HCT116 (cell line): ENCODE measurements at regions of chr1 and their contacts with region 1.

Region 1: DNA sequence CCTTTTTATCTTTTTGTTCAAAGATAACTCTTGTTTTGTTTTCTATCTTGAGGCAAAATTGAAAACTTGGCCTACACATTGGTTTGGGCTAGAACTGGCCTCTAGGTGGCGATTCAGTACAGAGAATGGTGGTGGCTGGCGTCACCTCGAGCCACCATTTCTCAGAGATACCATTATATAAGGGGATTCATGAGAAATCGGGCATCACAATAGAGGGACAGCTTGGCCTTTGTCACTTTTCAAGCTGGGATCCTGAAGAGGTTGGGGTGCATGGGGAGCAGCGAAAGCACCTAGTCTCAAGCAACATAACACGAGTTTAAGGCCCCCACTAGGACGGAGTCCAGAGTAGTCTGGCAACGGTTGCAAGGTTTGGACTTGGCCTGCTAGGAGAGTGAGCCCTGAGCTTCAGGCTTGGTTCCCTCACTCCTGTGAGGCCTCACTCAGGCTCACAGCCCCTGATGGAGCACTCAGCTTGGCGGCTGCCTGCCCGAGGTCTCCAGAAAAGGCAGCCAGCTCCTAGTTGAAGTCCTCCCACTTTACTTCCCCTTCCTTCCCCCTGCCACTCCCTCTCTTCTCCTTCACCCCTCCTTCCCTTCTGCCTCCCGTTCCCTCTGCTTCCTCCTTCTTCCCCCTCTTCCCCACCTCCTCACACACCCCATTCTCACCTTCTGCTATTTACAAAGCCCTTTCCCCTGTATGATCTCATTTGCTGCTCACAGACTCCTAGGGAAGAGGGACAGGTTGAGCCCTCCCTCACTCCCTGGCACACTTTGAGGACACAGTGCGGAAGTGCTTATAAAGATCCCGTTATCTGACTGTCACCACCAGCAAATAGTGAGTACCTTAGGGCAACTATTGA is 67.8 kb downstream of the LRIG2 start:
- DNase-seq: peak; percentile 43
- ATAC-seq: peak; percentile 94
- H3K4me3 ChIP-seq: no peak overlapping the region
- H3K27ac ChIP-seq: no peak overlapping the region
- H3K4me1 ChIP-seq: peaks cover 0 to 14% of the 10 kb centered on the region in 2 experiments; a peak in 2 of 4 replicates
- H3K27me3 ChIP-seq: no peaks in the 10 kb centered on the region
- CTCF ChIP-seq: peak; percentile 83 to 97 (median 85)
- POLR2A ChIP-seq: no peak
- RAD21 ChIP-seq: peak; percentile 96

Region 2: DNA sequence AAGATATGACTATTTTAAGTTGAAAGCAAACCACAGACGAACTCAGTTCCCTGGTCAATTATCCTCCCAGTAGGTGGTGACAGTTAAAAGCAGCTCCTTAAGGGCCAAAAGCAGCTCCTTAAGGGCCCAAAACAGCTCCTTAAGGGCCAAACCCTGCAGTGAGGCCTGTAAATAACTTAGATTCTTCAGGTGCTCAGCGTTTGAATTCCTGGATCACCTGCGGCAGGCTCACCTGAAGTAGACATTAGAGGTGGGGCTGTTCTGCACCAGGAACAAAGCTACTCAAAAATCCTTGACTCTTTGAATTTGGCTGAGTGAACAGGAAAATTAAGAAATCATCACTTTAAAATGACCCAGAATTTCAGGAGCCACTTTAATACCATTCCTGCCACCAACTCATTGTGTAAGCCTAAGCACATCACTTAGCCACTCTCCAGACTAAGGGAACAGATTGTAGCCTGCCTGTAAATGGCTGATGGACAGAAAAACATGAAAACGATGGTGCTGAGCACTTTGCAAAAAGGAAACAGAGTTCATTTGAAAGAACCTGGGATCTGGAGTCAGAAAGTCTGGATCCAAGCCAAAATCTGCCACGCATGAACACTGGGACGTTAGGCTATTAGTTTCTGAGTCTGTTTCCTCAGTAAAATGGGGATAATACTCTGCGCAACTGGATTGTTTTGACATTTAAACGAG is 59.1 kb after region 1 on chr1:
- CTCF ChIA-PET with region 1: no interaction called
- POLR2A ChIA-PET with region 1: no interaction called
- RAD21 ChIA-PET with region 1: no interaction called
- intact Hi-C with region 1: no loop called
- DNase-seq: no peak
- ATAC-seq: peak; percentile 60; the same call in 1 of the 2 replicates
- H3K4me3 ChIP-seq: no peak overlapping the region
- H3K27ac ChIP-seq: peak overlapping the region; percentile 32
- H3K4me1 ChIP-seq: peaks cover 9 to 15% of the 10 kb centered on the region in 2 experiments; a peak in 3 of 4 replicates
- H3K27me3 ChIP-seq: no peaks in the 10 kb centered on the region
- CTCF ChIP-seq: no peak
- POLR2A ChIP-seq: no peak
- RAD21 ChIP-seq: no peak

Region 3: DNA sequence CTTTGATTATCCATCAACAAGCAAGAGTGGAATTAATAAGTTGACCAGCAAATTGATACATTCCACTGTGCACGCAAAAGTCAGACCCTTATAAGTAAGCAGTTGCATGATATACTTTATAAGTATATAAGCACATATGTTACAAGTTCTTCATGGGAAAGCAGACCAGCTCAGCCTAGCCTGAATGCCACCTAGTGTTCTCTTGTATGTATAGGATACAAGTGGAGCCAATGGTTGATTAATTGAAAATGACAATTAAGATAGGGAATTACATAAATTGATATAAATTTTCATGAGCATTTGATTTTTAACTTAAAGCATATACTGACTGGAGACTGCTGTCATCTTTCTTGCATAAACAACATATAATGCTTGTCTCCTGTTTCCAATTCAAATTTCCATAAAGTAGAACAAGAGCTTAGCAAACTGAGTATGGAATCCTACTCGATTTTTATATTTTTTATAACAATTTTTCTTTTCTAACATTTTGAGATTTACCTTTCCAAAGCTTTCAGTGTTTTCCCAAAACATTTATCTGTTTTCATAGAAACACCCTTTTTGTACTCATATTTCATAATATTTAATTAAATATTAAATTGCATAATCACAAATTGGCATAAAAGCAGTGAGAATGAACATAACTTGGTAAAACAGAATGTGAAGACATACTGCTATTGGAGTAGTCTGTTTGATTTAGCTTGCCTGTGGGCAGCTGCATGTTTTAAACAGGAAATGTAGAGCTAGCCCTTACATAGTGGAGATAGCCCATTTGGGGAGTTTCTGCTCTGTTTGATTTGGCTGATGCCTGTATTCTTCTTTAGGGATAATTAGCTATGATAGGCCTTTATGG is 312.3 kb after region 1 on chr1:
- CTCF ChIA-PET with region 1: interaction called, 22 read pairs
- POLR2A ChIA-PET with region 1: no interaction called
- RAD21 ChIA-PET with region 1: interaction called in 1 of 2 experiments, 3 read pairs
- intact Hi-C with region 1: loop called (anchors 1 kb)
- DNase-seq: peak; percentile 39
- ATAC-seq: 0 out of 2 replicates have a peak, but pooled peaks have one; percentile 55
- H3K4me3 ChIP-seq: no peak overlapping the region
- H3K27ac ChIP-seq: no peak overlapping the region
- H3K4me1 ChIP-seq: peaks cover 18 to 28% of the 10 kb centered on the region in 2 experiments
- H3K27me3 ChIP-seq: no peaks in the 10 kb centered on the region
- CTCF ChIP-seq: peak; percentile 49 to 65 (median 60); a peak in 5 of 6 replicates
- POLR2A ChIP-seq: no peak
- RAD21 ChIP-seq: peak; percentile 67